ENCODE measurements at regions of chr6 and their contacts with region 1.

Region 1: DNA sequence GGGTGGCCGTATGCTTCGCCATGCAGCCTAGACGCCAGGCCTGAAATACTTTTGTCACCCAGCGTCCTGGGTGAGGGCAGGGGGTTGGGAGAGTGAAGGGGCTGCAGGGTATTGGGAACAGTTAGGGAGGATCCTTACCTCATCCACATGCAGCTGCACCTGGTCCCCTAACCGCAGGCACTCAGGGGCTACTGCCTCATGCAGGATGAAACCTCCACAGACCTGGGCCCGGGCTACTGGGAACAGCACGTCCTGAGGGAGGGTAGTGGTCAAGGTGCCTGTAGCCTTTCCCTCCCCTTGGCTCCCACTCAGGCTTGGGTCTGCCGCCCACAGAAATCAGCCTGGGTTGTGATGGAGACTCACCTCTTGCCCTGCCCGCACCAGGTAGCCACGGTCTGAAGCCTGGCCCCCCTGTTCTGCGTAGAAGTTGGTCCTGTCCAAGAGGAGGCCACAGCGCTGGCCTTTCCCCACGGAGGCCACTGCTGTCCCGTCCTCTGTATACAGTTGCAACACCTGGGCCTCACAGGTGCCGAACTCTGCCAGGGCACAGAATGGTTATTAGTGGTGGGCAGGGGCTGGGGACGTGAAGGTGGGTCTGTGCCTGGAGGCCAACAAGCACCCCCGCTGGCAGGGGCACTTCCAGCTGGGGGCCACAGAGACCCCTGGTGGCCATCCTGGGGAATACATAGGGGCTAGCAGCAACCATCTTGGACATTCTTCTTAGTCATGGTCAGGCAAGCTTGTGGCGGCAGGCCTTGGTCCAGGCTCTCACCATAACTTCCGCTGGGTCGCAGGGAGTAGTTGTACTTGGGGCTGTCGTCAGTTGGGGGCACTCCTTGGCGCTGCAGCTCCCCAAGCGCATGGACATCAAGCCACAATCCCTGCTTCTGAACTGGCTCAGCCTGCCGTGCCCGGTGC is 8.6 kb downstream of the AARS2 start:
- DNase-seq: peak; percentile 30 to 61
- ATAC-seq: peak; percentile 48 to 77 (median 60)
- H3K4me3 ChIP-seq: no peak overlapping the region
- H3K27ac ChIP-seq: no peak overlapping the region
- H3K4me1 ChIP-seq: no peaks in the 10 kb centered on the region
- H3K27me3 ChIP-seq: no peaks in the 10 kb centered on the region
- CTCF ChIP-seq: peak; percentile 65

Region 2: DNA sequence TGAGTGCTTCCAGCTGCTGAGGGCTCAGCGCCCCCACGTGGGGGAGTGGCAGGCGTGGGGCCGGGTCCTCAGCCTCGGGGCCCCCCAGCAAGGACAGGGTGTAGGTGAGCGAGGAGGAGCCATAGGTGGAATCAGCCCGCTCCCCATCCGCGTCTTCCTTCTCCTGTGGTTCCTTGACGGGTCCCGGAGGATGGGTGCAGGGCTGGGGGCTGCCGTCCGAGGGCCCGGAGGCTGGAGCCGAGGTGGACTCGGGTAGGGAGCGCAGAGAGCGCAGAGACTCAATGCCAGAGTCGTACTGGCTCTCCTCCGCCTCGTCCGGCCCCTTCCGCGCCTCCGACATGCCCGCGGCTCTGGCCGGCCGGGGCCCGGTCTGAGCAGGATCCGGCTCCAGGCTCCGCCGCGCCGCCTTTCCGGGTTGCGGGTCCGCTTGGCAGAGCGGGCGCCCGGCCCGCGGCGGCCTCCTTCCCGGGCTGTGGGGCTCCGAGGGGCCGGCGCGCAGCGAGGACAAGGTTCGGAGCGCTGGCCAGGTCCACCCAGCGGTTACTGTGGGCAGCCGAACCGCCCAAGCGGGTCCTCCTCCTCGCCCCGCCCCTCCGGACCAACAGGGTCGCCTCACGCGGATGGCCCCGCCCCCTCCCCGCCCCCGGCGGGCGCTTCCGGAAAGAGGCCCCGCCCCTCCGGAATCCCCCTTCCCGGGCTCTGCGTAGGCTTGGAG is 39.4 kb before region 1 on chr6 and contains the start of gene NFKBIE:
- intact Hi-C with region 1: loop called (anchors 5 kb)
- DNase-seq: peak; percentile 96 to 97
- ATAC-seq: peak; percentile 88 to 94 (median 90)
- H3K4me3 ChIP-seq: peak within 1 kb of the TSS; percentile 73
- H3K27ac ChIP-seq: peak within 1 kb of the TSS; percentile 73
- H3K4me1 ChIP-seq: peaks cover 15% of the 10 kb centered on the region
- H3K27me3 ChIP-seq: peaks cover 0 to 11% (median 8%) of the 10 kb centered on the region in 3 donors
- CTCF ChIP-seq: no peak
- total RNA-seq, gene NFKBIE: 2.1 to 5.0 (median 3.0) TPM

Measured in psoas muscle (tissue), 8 donors.